ENCODE measurements at regions of chr13 and their contacts with region 1.

Region 1: GRCh38 chr13:25574437-25575411 is 202.9 kb downstream of the ATP8A2 start:
- DNase-seq: peak; percentile 57 to 84 (median 67)
- ATAC-seq: peak; percentile 61
- H3K4me3 ChIP-seq: no peak overlapping the region
- H3K4me3 Mint-ChIP-seq: no peak overlapping the region
- H3K27ac ChIP-seq: no peak overlapping the region
- H3K27ac Mint-ChIP-seq: no peak overlapping the region
- H3K4me1 ChIP-seq: no peaks in the 10 kb centered on the region
- H3K4me1 Mint-ChIP-seq: no peaks in the 10 kb centered on the region
- H3K27me3 ChIP-seq: peaks cover 0 to 3% of the 10 kb centered on the region in 2 experiments
- H3K27me3 Mint-ChIP-seq: peaks cover 68% of the 10 kb centered on the region
- CTCF ChIP-seq: peak; percentile 87

Region 2: DNA sequence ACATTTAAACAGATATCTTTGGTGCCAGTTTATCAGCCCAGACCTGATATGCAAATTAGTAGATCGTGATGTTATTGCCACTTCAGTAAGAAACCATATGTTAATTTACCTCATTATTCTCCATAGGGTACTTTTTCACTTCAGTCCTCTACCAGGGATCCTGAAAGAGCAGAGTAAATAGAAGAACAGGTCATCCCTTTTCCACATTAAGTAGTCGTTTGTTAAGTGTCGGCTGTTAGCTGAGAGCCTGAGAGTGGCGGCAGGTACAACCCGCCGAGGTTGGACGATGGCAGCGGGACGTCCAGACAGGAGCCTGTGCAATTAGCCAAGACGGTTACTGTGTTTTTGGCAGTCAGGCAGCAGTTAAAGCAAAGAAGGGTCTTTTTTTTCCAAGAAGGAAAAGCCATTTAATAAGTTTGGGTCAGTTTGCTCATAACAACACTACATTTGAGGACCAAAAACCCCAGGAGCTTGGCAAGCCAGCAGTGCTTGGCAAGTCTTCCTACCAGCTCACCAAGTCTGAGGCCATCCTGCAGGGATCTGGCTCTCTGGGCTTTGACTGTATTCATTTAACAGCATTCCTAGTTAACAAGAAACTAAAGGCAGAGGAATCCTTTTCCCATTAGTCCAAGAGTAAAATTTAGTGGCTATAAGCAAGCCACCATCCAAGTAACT is 245.3 kb after region 1 on chr13:
- CTCF ChIA-PET with region 1: no interaction called
- POLR2A ChIA-PET with region 1: no interaction called
- intact Hi-C with region 1: loop called in 1 of 2 experiments (anchors 10 kb)
- DNase-seq: no peak
- ATAC-seq: no peak
- H3K4me3 ChIP-seq: no peak overlapping the region
- H3K4me3 Mint-ChIP-seq: no peak overlapping the region
- H3K27ac ChIP-seq: no peak overlapping the region
- H3K27ac Mint-ChIP-seq: no peak overlapping the region
- H3K4me1 ChIP-seq: no peaks in the 10 kb centered on the region
- H3K4me1 Mint-ChIP-seq: no peaks in the 10 kb centered on the region
- H3K27me3 ChIP-seq: no peaks in the 10 kb centered on the region
- H3K27me3 Mint-ChIP-seq: no peaks in the 10 kb centered on the region
- CTCF ChIP-seq: no peak

Region 3: GRCh38 chr13:26062844-26063444 is 488.2 kb after region 1 on chr13:
- CTCF ChIA-PET with region 1: interaction called, 10 read pairs
- POLR2A ChIA-PET with region 1: no interaction called
- intact Hi-C with region 1: loop called (anchors 1 kb)
- DNase-seq: peak in 11 of 14 experiments; percentile 8 to 77 (median 25)
- ATAC-seq: peak; percentile 60
- H3K4me3 ChIP-seq: no peak overlapping the region
- H3K4me3 Mint-ChIP-seq: no peak overlapping the region
- H3K27ac ChIP-seq: no peak overlapping the region
- H3K27ac Mint-ChIP-seq: no peak overlapping the region
- H3K4me1 ChIP-seq: no peaks in the 10 kb centered on the region
- H3K4me1 Mint-ChIP-seq: no peaks in the 10 kb centered on the region
- H3K27me3 ChIP-seq: no peaks in the 10 kb centered on the region
- H3K27me3 Mint-ChIP-seq: peaks cover 10% of the 10 kb centered on the region
- CTCF ChIP-seq: peak; percentile 67

Region 4: GRCh38 chr13:26295812-26296211 is 721.1 kb after region 1 on chr13:
- CTCF ChIA-PET with region 1: no interaction called
- POLR2A ChIA-PET with region 1: no interaction called
- intact Hi-C with region 1: no loop called
- DNase-seq: no peak
- ATAC-seq: no peak
- H3K4me3 ChIP-seq: no peak overlapping the region
- H3K4me3 Mint-ChIP-seq: no peak overlapping the region
- H3K27ac ChIP-seq: no peak overlapping the region
- H3K27ac Mint-ChIP-seq: no peak overlapping the region
- H3K4me1 ChIP-seq: no peaks in the 10 kb centered on the region
- H3K4me1 Mint-ChIP-seq: peaks cover 57% of the 10 kb centered on the region
- H3K27me3 ChIP-seq: no peaks in the 10 kb centered on the region
- H3K27me3 Mint-ChIP-seq: no peaks in the 10 kb centered on the region
- CTCF ChIP-seq: no peak

Region 5: GRCh38 chr13:26498656-26499591 is 924.2 kb after region 1 on chr13:
- CTCF ChIA-PET with region 1: no interaction called
- POLR2A ChIA-PET with region 1: no interaction called
- intact Hi-C with region 1: loop called (anchors 5 kb)
- DNase-seq: no peak
- ATAC-seq: no peak
- H3K4me3 ChIP-seq: no peak overlapping the region
- H3K4me3 Mint-ChIP-seq: no peak overlapping the region
- H3K27ac ChIP-seq: no peak overlapping the region
- H3K27ac Mint-ChIP-seq: no peak overlapping the region
- H3K4me1 ChIP-seq: no peaks in the 10 kb centered on the region
- H3K4me1 Mint-ChIP-seq: peaks cover 9% of the 10 kb centered on the region
- H3K27me3 ChIP-seq: peaks cover 0 to 4% of the 10 kb centered on the region in 2 experiments
- H3K27me3 Mint-ChIP-seq: peaks cover 10% of the 10 kb centered on the region
- CTCF ChIP-seq: no peak

Region 6: DNA sequence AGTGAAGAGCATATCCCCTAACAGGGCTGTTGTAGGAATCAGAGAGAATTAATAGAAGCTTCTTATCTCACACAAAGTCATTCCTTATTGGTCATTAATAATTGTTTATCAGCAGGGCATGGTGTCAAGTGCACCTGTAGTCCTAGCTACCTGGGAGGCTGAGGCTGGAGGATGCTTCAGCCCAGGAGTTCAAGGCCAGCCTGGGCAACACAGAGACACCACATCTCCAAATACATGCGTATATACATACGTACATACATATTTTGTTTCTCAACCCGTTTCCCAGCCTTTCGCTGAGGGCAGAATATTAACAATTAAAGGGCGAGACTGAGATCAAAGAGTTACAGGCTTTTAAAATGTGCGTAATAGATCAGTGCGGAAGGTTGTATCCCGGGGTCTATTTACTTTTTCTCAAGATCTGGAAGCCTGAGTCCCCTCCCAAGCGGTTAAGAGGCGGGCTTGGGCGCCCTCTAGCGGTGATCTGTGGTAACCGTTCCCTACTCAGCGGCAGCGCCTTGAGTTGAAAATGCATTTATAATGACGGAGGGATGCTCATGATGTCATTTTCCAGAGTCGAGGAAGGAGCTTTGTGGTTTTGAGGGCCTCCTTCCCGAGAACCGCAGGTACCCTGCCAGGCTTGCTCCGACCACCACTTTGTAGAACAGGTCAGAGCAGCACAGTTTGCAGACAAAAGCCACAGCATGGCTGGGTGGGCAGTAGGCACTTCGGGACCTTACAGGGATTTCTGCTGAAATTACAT is 1355.4 kb after region 1 on chr13:
- CTCF ChIA-PET with region 1: no interaction called
- POLR2A ChIA-PET with region 1: no interaction called
- intact Hi-C with region 1: loop called in 1 of 2 experiments (anchors 10 kb)
- DNase-seq: peak; percentile 38 to 78 (median 62)
- ATAC-seq: peak; percentile 59
- H3K4me3 ChIP-seq: no peak overlapping the region
- H3K4me3 Mint-ChIP-seq: no peak overlapping the region
- H3K27ac ChIP-seq: no peak overlapping the region
- H3K27ac Mint-ChIP-seq: no peak overlapping the region
- H3K4me1 ChIP-seq: peaks cover 5% of the 10 kb centered on the region
- H3K4me1 Mint-ChIP-seq: no peaks in the 10 kb centered on the region
- H3K27me3 ChIP-seq: peaks cover 2 to 4% of the 10 kb centered on the region in 2 experiments
- H3K27me3 Mint-ChIP-seq: peaks cover 11% of the 10 kb centered on the region
- CTCF ChIP-seq: peak; percentile 96